ENCODE measurements at regions of chr10 and their contacts with region 1.

Region 1: DNA sequence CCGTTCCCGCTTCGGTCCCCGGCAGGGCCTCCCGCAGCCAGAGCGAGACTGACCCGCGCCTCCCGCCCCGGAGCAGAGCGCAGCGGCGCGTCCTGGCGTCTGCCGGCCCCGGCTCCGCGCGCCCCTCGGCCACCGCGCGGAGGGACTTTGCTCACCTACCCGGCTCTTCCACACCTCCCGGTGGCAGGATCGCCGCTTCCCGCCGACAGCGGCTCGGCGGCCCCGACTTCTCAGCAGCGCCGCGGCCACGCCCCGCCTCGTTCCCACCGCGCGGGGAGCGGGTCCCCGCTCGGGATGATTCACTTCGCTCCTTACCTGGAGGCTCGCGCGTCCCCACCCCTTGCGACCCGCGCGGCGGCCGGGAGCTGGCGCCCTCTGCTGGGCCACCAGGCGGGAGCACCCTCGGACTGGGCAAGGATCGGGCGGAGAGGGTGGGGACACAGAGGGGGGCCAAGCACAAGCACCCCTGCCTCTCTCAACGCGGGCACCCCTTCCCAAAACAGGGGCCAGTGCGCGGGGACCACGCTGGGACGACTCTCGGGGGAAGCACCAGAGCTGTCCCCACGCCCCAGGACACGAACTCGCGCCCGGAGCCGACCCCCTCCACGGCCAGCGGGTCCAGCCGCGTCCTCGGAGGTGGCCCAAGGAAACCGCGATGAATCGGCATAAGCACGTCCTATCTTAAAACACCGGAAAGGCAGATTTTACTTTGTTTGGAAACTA is 101.0 kb upstream of the SVIL start:
- DNase-seq: peak; percentile 84 to 89
- ATAC-seq: peak; percentile 63 to 76
- H3K4me3 ChIP-seq: peak overlapping the region; percentile 79 to 97 (median 87)
- H3K27ac ChIP-seq: peak overlapping the region; percentile 96 to 99 (median 97)
- H3K4me1 ChIP-seq: peaks cover 34 to 39% of the 10 kb centered on the region in 2 donors
- H3K27me3 ChIP-seq: no peaks in the 10 kb centered on the region
- CTCF ChIP-seq: peak; percentile 93 to 99 (median 97)
- POLR2A ChIP-seq: peak; percentile 90 to 94

Region 2: DNA sequence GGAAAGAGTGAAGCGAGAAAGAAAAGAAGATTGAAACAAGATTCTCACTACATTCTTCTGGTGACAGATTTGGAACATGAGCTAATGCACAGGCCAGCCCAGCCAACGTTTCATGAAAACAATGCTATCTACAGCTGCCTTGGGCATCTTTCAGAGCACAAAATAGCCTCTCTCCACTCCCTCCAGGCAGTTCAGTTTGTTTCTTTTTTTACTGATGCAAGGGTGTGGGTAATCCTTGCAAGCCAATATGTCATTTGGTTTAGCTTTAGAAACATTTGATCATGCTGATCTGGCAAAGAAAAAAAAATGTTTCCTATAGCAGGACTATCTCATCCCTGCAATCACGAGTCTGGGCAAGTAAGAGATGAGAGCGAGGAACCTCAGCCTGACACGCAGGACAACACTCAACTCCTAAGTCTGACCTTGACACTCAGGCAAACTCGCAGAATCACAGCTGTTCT is 136.9 kb before region 1 on chr10:
- in situ Hi-C with region 1: no loop called
- intact Hi-C with region 1: loop called (anchors 5 kb)
- DNase-seq: peak in 1 of 2 donors; percentile 63
- ATAC-seq: peak; percentile 59 to 61
- H3K4me3 ChIP-seq: peak overlapping the region in 1 of 4 donors; percentile 16
- H3K27ac ChIP-seq: peak overlapping the region; percentile 95 to 96 (median 96)
- H3K4me1 ChIP-seq: peaks cover 97 to 98% of the 10 kb centered on the region in 2 donors
- H3K27me3 ChIP-seq: no peaks in the 10 kb centered on the region
- CTCF ChIP-seq: no peak
- POLR2A ChIP-seq: no peak

Region 3: DNA sequence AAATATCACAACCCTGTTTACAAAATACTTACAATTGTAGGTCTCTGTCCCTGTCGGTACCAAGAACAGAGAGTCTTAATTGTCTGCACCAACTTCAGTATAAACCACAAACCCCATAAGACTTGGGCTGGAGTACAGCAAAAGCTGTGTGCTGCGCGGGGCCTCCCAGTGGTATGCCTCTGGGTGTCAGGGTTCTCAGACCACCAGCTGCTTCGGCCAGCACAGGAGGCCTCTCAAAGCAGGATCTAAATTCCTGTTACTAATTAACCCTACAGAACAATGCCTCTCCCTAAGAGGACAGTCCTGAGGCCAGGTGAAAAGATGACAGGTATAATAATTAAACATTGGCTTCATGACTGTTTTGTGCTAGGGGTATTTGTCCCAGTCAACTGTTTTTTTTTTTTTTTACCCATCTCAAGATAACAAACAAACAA is 100.0 kb before region 1 on chr10:
- in situ Hi-C with region 1: loop called in 1 of 4 experiments (anchors 5 kb)
- intact Hi-C with region 1: no loop called
- DNase-seq: no peak
- ATAC-seq: peak; percentile 16 to 18
- H3K4me3 ChIP-seq: peak overlapping the region; percentile 2 to 73 (median 54)
- H3K27ac ChIP-seq: peak overlapping the region; percentile 95 to 96 (median 96)
- H3K4me1 ChIP-seq: peaks cover 11 to 21% of the 10 kb centered on the region in 2 donors
- H3K27me3 ChIP-seq: no peaks in the 10 kb centered on the region
- CTCF ChIP-seq: no peak
- POLR2A ChIP-seq: peak in 1 of 2 donors; percentile 7

Region 4: GRCh38 chr10:29811751-29812449 is 76.1 kb after region 1 on chr10:
- in situ Hi-C with region 1: no loop called
- intact Hi-C with region 1: loop called (anchors 5 kb)
- DNase-seq: peak; percentile 72 to 89
- ATAC-seq: peak; percentile 88 to 94
- H3K4me3 ChIP-seq: peak overlapping the region in 2 of 4 donors; percentile 1 to 20
- H3K27ac ChIP-seq: peak overlapping the region; percentile 90 to 92 (median 90)
- H3K4me1 ChIP-seq: peaks cover 43 to 52% of the 10 kb centered on the region in 2 donors
- H3K27me3 ChIP-seq: no peaks in the 10 kb centered on the region
- CTCF ChIP-seq: peak in 1 of 5 experiments; percentile 5
- POLR2A ChIP-seq: no peak

Region 5: DNA sequence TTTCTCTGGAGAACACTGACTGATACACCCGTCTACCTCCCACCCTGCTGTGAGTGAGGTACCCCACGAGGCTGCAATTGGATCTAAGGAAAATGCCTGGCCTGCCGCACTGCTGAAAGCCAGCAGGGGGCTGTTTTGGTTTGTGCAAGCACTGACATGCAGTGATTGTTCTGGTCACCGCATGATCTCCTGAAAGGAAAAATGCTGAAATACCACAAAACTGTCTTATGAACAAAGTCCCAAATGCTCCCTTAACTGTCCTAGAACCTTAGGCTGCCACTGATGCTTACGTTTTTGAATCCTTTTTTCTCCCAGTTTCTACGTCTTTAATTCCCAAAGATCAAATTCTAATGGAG is 190.9 kb after region 1 on chr10:
- in situ Hi-C with region 1: no loop called
- intact Hi-C with region 1: no loop called
- DNase-seq: no peak
- ATAC-seq: peak in 1 of 2 donors; percentile 59
- H3K4me3 ChIP-seq: no peak overlapping the region
- H3K27ac ChIP-seq: no peak overlapping the region
- H3K4me1 ChIP-seq: no peaks in the 10 kb centered on the region
- H3K27me3 ChIP-seq: no peaks in the 10 kb centered on the region
- CTCF ChIP-seq: peak in 3 of 5 experiments; percentile 12 to 41 (median 40)
- POLR2A ChIP-seq: no peak

Region 6: GRCh38 chr10:29946953-29947700 is 211.4 kb after region 1 on chr10:
- in situ Hi-C with region 1: no loop called
- intact Hi-C with region 1: loop called (anchors 5 kb)
- DNase-seq: peak; percentile 84 to 93
- ATAC-seq: peak; percentile 84 to 87
- H3K4me3 ChIP-seq: peak overlapping the region; percentile 14 to 39 (median 24)
- H3K27ac ChIP-seq: peak overlapping the region; percentile 91 to 99 (median 96)
- H3K4me1 ChIP-seq: peaks cover 32 to 36% of the 10 kb centered on the region in 2 donors
- H3K27me3 ChIP-seq: no peaks in the 10 kb centered on the region
- CTCF ChIP-seq: no peak
- POLR2A ChIP-seq: peak; percentile 25 to 60